Colonic mucosa (tissue), 4 donors: ENCODE measurements at regions of chr3 and their contacts with region 1.

Region 1: DNA sequence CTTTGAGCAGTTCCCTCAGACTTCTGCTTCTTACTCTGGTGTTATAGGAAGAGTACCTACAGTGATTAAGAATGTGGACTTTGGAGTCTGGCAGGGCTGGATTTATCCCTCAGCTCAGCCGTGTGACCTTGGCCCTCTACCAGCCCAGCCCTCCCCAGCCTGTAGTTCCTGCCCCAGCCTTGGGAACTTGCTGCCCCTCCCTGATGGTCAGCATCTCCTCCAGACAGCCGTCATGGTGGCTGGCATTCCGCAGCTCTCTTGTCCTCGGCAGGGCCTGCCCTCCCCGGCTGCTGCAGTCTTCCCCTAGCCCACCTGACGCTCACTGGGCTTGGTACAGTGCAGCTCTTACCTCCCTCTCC is 21.9 kb upstream of the CPNE9 start:
- DNase-seq: peak; percentile 45
- H3K4me3 ChIP-seq: no peak overlapping the region
- H3K27ac ChIP-seq: no peak overlapping the region
- H3K4me1 ChIP-seq: no peaks in the 10 kb centered on the region
- H3K27me3 ChIP-seq: no peaks in the 10 kb centered on the region
- CTCF ChIP-seq: no peak

Region 2: GRCh38 chr3:9503283-9503682 is 178.4 kb before region 1 on chr3:
- intact Hi-C with region 1: loop called (anchors 10 kb)
- DNase-seq: peak; percentile 66
- H3K4me3 ChIP-seq: no peak overlapping the region
- H3K27ac ChIP-seq: no peak overlapping the region
- H3K4me1 ChIP-seq: no peaks in the 10 kb centered on the region
- H3K27me3 ChIP-seq: peaks cover under 1% of the 10 kb centered on the region
- CTCF ChIP-seq: peak; percentile 75